H1 (cell line): ENCODE measurements at regions of chr9 and their contacts with region 1.

Region 1: GRCh38 chr9:91758491-91758981 is 191.5 kb downstream of the ROR2 start:
- DNase-seq: peak; percentile 34 to 93
- H3K4me3 ChIP-seq: no peak overlapping the region
- H3K27ac ChIP-seq: no peak overlapping the region
- H3K4me1 ChIP-seq: 0 out of 7 replicates have a peak, but pooled peaks cover 0 to 2% (median 0%) of the 10 kb centered on the region in 4 experiments
- H3K27me3 ChIP-seq: no peaks in the 10 kb centered on the region
- CTCF ChIP-seq: peak; percentile 85 to 87 (median 86)
- EP300 ChIP-seq: no peak
- POLR2A ChIP-seq: no peak
- RAD21 ChIP-seq: peak; percentile 78 to 86

Region 2: GRCh38 chr9:91734371-91734981 is 24.1 kb before region 1 on chr9:
- CTCF ChIA-PET with region 1: interaction called, 21 read pairs
- POLR2A ChIA-PET with region 1: no interaction called
- DNase-seq: peak; percentile 23 to 96
- H3K4me3 ChIP-seq: no peak overlapping the region
- H3K27ac ChIP-seq: no peak overlapping the region
- H3K4me1 ChIP-seq: no peaks in the 10 kb centered on the region; a peak in 1 of 7 replicates
- H3K27me3 ChIP-seq: no peaks in the 10 kb centered on the region
- CTCF ChIP-seq: peak; percentile 81 to 99 (median 99)
- EP300 ChIP-seq: no peak
- POLR2A ChIP-seq: no peak
- RAD21 ChIP-seq: peak; percentile 65 to 73

Region 3: GRCh38 chr9:91933556-91934352 is 175.2 kb after region 1 on chr9:
- CTCF ChIA-PET with region 1: interaction called, 13 read pairs
- POLR2A ChIA-PET with region 1: no interaction called
- DNase-seq: no peak
- H3K4me3 ChIP-seq: no peak overlapping the region
- H3K27ac ChIP-seq: no peak overlapping the region
- H3K4me1 ChIP-seq: peaks cover 0 to 4% (median under 1%) of the 10 kb centered on the region in 4 experiments; a peak in 2 of 7 replicates
- H3K27me3 ChIP-seq: peaks cover 0 to 5% (median 2%) of the 10 kb centered on the region in 4 experiments; a peak in 2 of 7 replicates
- CTCF ChIP-seq: no peak
- EP300 ChIP-seq: no peak
- POLR2A ChIP-seq: no peak
- RAD21 ChIP-seq: no peak

Region 4: DNA sequence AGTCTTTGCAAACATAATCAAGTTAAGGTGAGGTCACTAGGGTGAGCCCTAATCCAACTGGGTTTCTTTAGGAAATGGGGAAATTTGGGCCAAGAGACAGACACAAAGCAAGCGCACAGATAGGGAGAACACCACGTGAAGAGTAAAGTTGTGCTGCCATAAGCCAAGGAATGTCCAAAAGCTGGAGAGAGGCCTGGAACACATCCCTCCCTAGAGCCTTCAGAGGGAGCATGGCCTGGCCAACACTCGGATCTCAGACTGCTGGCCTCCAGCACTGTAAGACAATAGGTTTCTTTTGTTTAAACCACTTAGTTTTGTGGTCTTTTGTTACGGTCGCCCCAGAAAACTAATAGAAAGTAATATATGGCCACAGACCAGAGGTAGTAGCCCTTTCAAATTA is 199.6 kb after region 1 on chr9:
- CTCF ChIA-PET with region 1: interaction called, 77 read pairs
- POLR2A ChIA-PET with region 1: no interaction called
- DNase-seq: no peak
- H3K4me3 ChIP-seq: no peak overlapping the region
- H3K27ac ChIP-seq: no peak overlapping the region
- H3K4me1 ChIP-seq: peaks cover 2 to 3% (median 2%) of the 10 kb centered on the region in 4 experiments; a peak in 6 of 7 replicates
- H3K27me3 ChIP-seq: 0 out of 7 replicates have a peak, but pooled peaks cover 0 to 3% (median 0%) of the 10 kb centered on the region in 4 experiments
- CTCF ChIP-seq: no peak
- EP300 ChIP-seq: no peak
- POLR2A ChIP-seq: no peak
- RAD21 ChIP-seq: no peak

Region 5: DNA sequence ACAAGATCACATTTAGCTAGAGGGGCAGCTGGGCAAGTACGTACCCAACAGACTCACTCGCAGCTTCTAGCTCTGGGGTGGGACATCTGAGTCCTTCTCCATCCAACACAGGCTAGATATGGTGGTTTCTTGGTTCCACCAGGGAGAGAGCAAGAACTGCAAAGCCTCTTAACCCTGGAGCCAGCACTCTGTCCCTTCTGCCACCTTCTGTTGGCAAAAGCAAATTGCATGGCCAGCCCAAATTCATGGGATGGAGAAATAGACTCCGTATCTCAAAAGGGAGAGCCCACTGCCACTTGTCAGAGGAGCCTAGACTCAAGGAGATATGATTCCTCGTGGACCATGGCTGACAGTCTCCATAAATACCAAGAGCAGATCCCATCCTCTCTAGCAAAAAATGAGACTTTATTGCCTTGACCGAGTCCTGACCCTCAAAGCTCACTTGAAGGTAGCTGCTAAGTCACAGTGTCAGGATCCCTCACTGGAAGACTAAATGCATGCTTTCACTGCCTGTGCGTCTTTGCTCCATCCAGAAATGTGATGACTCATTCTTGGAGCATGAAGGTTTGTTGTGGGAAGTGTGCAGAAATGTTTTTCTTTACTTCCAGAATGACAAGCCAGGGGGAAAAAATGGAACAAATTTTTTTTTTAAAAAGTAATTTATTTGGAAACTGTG is 220.3 kb after region 1 on chr9:
- CTCF ChIA-PET with region 1: interaction called, 26 read pairs
- POLR2A ChIA-PET with region 1: no interaction called
- DNase-seq: peak in 1 of 2 experiments; percentile 58
- H3K4me3 ChIP-seq: no peak overlapping the region
- H3K27ac ChIP-seq: no peak overlapping the region
- H3K4me1 ChIP-seq: no peaks in the 10 kb centered on the region
- H3K27me3 ChIP-seq: no peaks in the 10 kb centered on the region
- CTCF ChIP-seq: peak; percentile 56 to 86 (median 75)
- EP300 ChIP-seq: no peak
- POLR2A ChIP-seq: no peak
- RAD21 ChIP-seq: peak; percentile 80 to 86

Region 6: DNA sequence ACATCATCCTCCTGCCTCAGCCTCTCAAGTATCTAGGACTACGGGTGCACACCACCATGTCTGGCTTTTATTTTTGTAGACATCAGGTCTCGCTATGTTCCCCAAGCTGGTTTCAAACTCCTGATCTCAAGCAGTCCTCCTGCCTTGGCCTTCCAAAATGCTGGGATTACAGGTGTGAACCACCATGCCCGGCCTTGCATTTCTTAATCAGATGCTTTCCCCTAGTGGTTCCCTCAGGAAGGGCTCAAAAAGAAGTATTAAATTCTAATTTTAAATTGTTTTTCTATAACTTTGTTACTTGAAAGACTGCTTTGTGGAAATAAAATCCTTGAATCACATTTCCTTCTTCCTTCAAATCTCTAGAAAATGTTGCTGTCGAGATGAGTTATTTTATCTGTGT is 271.0 kb after region 1 on chr9:
- CTCF ChIA-PET with region 1: interaction called, 10 read pairs
- POLR2A ChIA-PET with region 1: no interaction called
- DNase-seq: no peak
- H3K4me3 ChIP-seq: no peak overlapping the region
- H3K27ac ChIP-seq: no peak overlapping the region
- H3K4me1 ChIP-seq: peaks cover 0 to 3% (median 0%) of the 10 kb centered on the region in 4 experiments; a peak in 1 of 7 replicates
- H3K27me3 ChIP-seq: no peaks in the 10 kb centered on the region
- CTCF ChIP-seq: peak in 2 of 3 experiments; percentile 40 to 42; a peak in 3 of 4 replicates
- EP300 ChIP-seq: no peak
- POLR2A ChIP-seq: no peak
- RAD21 ChIP-seq: peak; percentile 51 to 58